ENCODE measurements at regions of chrX and their contacts with region 1.

Region 1: DNA sequence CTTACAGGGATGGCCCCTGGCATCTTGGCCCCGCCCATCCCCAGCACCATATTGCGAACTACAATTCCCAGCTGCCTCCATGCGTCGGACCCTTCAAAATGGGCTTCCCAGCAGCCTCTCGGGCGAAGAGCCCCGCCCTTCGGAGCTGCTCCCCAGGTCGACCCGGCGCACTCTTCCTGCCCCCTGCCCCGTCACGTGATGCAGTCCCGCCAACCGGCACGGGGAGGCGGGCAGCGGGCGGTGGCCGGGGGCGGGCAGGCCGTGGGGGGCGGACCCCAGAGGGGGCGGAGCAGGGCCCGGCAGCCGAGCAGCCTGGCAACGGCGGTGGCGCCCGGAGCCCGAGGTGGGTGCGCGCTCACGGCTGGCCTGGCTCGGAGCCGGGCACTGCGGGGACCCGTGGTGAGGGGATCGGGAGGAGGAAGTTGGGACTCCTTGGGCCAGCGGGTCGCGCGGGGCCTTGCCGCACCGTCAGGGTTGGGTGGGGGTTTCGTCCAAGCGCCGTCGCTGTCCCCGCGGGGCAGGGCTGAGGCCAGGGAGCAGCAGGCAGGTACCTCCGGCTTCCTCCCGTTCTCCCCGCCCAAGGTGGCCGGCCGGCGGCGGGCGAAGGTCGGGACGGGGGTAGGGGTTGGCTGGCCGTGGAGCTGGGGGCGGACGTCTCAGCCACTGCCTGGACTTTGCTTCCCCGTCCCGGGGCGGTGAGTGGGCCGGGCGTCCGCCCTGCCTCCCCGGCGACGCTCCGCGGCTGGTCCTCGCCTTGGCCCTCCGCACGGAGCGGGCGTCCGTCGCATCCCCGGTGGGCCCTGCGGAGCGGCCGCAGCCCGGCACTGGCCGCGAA is at the start of gene MTM1:
- DNase-seq: peak; percentile 93 to 94 (median 93)
- H3K4me3 ChIP-seq: peak within 1 kb of the TSS; percentile 57
- H3K27ac ChIP-seq: peak within 1 kb of the TSS in 1 of 2 donors; percentile 36
- H3K4me1 ChIP-seq: peaks cover 3% of the 10 kb centered on the region
- H3K27me3 ChIP-seq: no peaks in the 10 kb centered on the region
- CTCF ChIP-seq: no peak
- EP300 ChIP-seq: no peak
- POLR2A ChIP-seq: peak; percentile 61
- total RNA-seq, gene MTM1: 13.4 to 28.3 (median 25.3) TPM

Region 2: GRCh38 chrX:150508451-150509367 is 59.8 kb before region 1 on chrX:
- intact Hi-C with region 1: loop called in 1 of 4 experiments (anchors 10 kb)
- DNase-seq: peak; percentile 80 to 86 (median 82)
- H3K4me3 ChIP-seq: no peak overlapping the region
- H3K27ac ChIP-seq: peak overlapping the region; percentile 53 to 90
- H3K4me1 ChIP-seq: peaks cover 3% of the 10 kb centered on the region
- H3K27me3 ChIP-seq: no peaks in the 10 kb centered on the region
- CTCF ChIP-seq: no peak
- EP300 ChIP-seq: no peak
- POLR2A ChIP-seq: no peak